Thyroid gland (tissue), 4 donors: ENCODE measurements at regions of chr6 and their contacts with region 1.

Region 1: DNA sequence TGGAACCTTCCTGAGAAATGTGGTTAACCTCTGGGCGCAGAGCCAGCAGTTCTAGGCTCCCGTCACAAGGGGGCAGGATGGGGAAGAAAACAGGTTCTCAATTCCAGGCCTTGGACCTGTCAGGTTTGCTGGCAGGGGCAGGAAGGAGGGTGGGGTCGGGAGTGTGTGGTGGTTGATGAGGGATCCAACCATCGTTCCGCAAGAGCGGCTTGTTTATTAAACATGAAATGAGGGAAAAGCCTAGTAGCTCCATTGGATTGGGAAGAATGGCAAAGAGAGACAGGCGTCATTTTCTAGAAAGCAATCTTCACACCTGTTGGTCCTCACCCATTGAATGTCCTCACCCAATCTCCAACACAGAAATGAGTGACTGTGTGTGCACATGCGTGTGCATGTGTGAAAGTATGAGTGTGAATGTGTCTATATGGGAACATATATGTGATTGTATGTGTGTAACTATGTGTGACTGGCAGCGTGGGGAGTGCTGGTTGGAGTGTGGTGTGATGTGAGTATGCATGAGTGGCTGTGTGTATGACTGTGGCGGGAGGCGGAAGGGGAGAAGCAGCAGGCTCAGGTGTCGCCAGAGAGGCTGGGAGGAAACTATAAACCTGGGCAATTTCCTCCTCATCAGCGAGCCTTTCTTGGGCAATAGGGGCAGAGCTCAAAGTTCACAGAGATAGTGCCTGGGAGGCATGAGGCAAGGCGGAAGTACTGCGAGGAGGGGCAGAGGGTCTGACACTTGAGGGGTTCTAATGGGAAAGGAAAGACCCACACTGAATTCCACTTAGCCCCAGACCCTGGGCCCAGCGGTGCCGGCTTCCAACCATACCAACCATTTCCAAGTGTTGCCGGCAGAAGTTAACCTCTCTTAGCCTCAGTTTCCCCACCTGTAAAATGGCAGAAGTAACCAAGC is 29.6 kb downstream of the SRSF3 start:
- DNase-seq: peak; percentile 85 to 91
- H3K4me3 ChIP-seq: no peak overlapping the region
- H3K27ac ChIP-seq: peak overlapping the region in 1 of 3 donors; percentile 39
- H3K4me1 ChIP-seq: peaks cover 22 to 48% of the 10 kb centered on the region in 2 donors
- H3K27me3 ChIP-seq: no peaks in the 10 kb centered on the region
- CTCF ChIP-seq: peak; percentile 73 to 92 (median 88)
- POLR2A ChIP-seq: no peak

Region 2: GRCh38 chr6:36678518-36679027 is 54.8 kb after region 1 on chr6 and contains the start of gene CDKN1A:
- intact Hi-C with region 1: loop called (anchors 5 kb)
- DNase-seq: peak; percentile 96 to 97
- H3K4me3 ChIP-seq: peak within 1 kb of the TSS; percentile 90 to 95 (median 91)
- H3K27ac ChIP-seq: peak within 1 kb of the TSS; percentile 99
- H3K4me1 ChIP-seq: peaks cover 37 to 44% of the 10 kb centered on the region in 2 donors
- H3K27me3 ChIP-seq: no peaks in the 10 kb centered on the region
- CTCF ChIP-seq: peak in 1 of 6 experiments; percentile 25
- POLR2A ChIP-seq: peak; percentile 99 to 100
- total RNA-seq, gene CDKN1A: 41.0 to 64.5 (median 61.8) TPM

Region 3: DNA sequence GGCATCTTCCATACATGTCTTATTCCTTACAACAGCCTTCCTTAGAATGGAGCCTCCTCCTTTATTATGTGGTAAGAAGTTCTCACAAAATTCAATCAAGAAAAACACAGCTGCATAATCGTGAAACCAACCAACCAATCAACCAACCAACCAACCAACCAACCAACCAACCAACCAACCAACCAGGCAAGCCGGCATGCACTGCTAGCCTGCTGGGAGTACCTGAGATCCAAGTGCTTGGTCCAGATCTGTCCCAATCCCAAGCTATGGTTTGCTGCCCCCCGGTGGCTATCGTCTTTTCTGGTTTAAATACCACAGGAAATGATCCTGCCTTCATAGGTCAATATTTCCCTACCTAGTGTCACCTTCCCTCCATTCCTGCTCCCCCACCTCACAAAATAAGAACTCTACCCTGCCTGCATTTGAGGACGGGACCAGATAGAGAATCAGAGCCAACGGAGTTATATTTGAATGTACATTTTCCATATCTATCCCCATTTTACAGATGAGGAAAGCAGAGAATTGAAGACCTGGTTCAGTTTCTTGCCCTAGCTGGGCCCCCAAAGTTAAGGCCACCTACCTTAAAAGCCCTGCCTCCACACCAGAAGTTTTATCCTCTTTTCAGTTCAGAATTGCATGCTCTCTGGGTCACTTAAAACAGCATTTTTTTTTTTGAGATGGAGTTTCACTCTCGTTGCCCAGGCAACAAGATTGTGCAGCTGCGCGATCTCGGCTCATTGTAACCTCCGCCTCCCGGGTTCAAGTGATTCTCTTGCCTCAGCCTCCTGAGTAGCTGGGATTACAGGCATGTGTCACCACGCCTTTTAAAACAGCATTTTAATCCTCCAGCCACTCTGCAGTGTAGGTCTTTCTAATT is 100.9 kb after region 1 on chr6:
- intact Hi-C with region 1: loop called (anchors 10 kb)
- DNase-seq: peak; percentile 88 to 91
- H3K4me3 ChIP-seq: no peak overlapping the region
- H3K27ac ChIP-seq: no peak overlapping the region
- H3K4me1 ChIP-seq: no peaks in the 10 kb centered on the region
- H3K27me3 ChIP-seq: no peaks in the 10 kb centered on the region
- CTCF ChIP-seq: peak; percentile 33 to 88 (median 65)
- POLR2A ChIP-seq: no peak

Region 4: DNA sequence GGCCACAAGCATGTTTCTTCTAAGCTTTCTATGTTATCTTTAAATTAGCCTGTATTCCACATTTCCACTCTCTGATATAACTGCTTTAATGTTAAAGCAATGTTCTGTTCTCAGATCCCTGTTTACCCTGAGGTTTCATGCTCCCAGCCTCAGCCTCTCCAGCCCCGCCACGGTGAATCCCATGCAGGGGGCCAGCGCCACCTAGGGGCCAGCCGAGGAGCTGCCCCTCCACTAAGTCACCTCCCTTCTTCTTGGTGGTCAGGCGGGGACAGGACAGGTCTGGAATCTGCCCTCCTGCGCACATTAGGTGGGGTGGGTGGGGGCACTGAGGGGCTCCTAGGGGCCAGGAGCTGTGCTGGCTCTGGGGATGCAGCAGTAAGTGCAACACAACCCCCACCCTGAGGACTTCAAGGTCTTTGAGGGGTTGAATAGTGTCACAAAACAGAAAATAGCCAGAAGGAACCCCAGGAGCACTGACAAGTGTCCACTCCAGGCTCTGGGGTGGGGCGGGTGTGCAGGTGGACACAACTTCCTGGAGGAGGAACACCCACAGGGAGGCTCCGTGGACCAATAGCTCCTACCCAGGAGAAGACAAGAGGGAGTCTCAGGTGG is 135.5 kb after region 1 on chr6:
- intact Hi-C with region 1: loop called (anchors 5 kb)
- DNase-seq: peak; percentile 79 to 82
- H3K4me3 ChIP-seq: no peak overlapping the region
- H3K27ac ChIP-seq: no peak overlapping the region
- H3K4me1 ChIP-seq: peaks cover 0 to 3% of the 10 kb centered on the region in 2 donors
- H3K27me3 ChIP-seq: no peaks in the 10 kb centered on the region
- CTCF ChIP-seq: peak; percentile 83 to 100 (median 96)
- POLR2A ChIP-seq: no peak